Ascending aorta (tissue), 2 donors: ENCODE measurements at regions of chr6 and their contacts with region 1.

Region 1: GRCh38 chr6:109482905-109483735 is at the start of gene ZBTB24:
- DNase-seq: peak; percentile 61 to 94
- H3K4me3 ChIP-seq: peak within 1 kb of the TSS; percentile 88 to 99
- H3K27ac ChIP-seq: peak within 1 kb of the TSS; percentile 78 to 81
- H3K4me1 ChIP-seq: peaks cover 8 to 31% of the 10 kb centered on the region in 2 donors
- H3K27me3 ChIP-seq: no peaks in the 10 kb centered on the region
- CTCF ChIP-seq: peak in 1 of 3 experiments; percentile 14
- total RNA-seq, gene ZBTB24: 10.2 TPM

Region 2: GRCh38 chr6:108163267-108163643 is 1319.9 kb before region 1 on chr6:
- intact Hi-C with region 1: no loop called
- DNase-seq: no peak
- H3K4me3 ChIP-seq: no peak overlapping the region
- H3K27ac ChIP-seq: no peak overlapping the region
- H3K4me1 ChIP-seq: peaks cover 6 to 22% of the 10 kb centered on the region in 2 donors
- H3K27me3 ChIP-seq: peaks cover 19% of the 10 kb centered on the region
- CTCF ChIP-seq: no peak

Region 3: GRCh38 chr6:109455502-109456282 is 27.4 kb before region 1 on chr6 and contains the start of gene MICAL1:
- intact Hi-C with region 1: loop called (anchors 2 kb)
- DNase-seq: peak in 1 of 2 donors; percentile 88
- H3K4me3 ChIP-seq: peak within 1 kb of the TSS; percentile 79 to 82
- H3K27ac ChIP-seq: peak within 1 kb of the TSS; percentile 84 to 88
- H3K4me1 ChIP-seq: peaks cover 14 to 20% of the 10 kb centered on the region in 2 donors
- H3K27me3 ChIP-seq: no peaks in the 10 kb centered on the region
- CTCF ChIP-seq: peak; percentile 22 to 45 (median 31)
- total RNA-seq, gene MICAL1: 55.6 TPM